Dendritic cell treated with granulocyte-macrophage colony-stimulating factor and Interleukin-4, amounts not matched to agents 40 ng/mL and 50 ng/mL, for 4 days (primary cell): ENCODE measurements at regions of chr9 and their contacts with region 1.

Region 1: GRCh38 chr9:111037381-111038305 is 627 bp downstream of the LPAR1 start:
- H3K4me3 Mint-ChIP-seq: peak overlapping the region; percentile 77
- H3K27ac Mint-ChIP-seq: peak overlapping the region; percentile 88
- H3K4me1 Mint-ChIP-seq: peaks cover 45% of the 10 kb centered on the region
- H3K27me3 Mint-ChIP-seq: peaks cover 20% of the 10 kb centered on the region

Region 2: GRCh38 chr9:110638381-110638954 is 399.2 kb before region 1 on chr9:
- intact Hi-C with region 1: loop called (anchors 5 kb)
- H3K4me3 Mint-ChIP-seq: no peak overlapping the region
- H3K27ac Mint-ChIP-seq: no peak overlapping the region
- H3K4me1 Mint-ChIP-seq: no peaks in the 10 kb centered on the region
- H3K27me3 Mint-ChIP-seq: no peaks in the 10 kb centered on the region

Region 3: GRCh38 chr9:110874963-110875674 is 162.5 kb before region 1 on chr9:
- intact Hi-C with region 1: loop called (anchors 10 kb)
- H3K4me3 Mint-ChIP-seq: no peak overlapping the region
- H3K27ac Mint-ChIP-seq: peak overlapping the region; percentile 52
- H3K4me1 Mint-ChIP-seq: peaks cover 43% of the 10 kb centered on the region
- H3K27me3 Mint-ChIP-seq: peaks cover 17% of the 10 kb centered on the region

Region 4: DNA sequence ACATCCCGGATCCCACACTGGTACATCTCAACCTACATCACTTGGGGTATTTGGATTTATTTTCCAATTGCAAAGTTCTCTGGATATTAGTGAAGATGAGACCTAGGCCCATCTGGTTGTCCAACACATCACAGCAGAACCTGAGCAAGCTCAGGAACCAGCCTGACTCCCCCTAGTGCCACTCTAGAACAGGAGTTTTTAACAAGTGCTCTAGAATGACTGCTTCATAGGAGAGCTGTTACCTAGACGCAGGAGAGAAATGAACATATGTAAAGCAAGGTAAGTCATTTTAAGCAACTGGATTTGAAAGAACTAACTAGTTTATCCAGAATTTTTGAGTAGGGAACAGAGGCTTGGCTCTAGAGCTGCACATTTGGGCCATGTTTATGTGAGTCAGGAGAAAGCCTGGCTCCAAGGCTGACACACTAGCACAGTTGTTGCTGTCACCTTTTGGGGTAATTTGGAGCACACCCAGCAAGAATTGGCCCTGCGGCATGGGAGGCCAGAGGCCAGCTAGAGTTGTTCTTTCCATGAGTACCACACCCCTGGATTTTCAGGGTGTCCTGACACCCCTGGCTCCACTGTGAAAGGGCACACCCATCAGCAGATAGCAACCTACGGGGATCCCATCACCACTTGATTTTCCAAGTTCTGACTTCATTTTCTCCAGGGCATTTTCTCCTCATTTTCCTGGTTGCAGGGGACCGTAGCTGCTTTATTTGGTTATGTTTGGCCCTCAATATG is 111.5 kb after region 1 on chr9:
- intact Hi-C with region 1: loop called (anchors 5 kb)
- H3K4me3 Mint-ChIP-seq: no peak overlapping the region
- H3K27ac Mint-ChIP-seq: peak overlapping the region; percentile 77
- H3K4me1 Mint-ChIP-seq: peaks cover 37% of the 10 kb centered on the region
- H3K27me3 Mint-ChIP-seq: no peaks in the 10 kb centered on the region

Region 5: DNA sequence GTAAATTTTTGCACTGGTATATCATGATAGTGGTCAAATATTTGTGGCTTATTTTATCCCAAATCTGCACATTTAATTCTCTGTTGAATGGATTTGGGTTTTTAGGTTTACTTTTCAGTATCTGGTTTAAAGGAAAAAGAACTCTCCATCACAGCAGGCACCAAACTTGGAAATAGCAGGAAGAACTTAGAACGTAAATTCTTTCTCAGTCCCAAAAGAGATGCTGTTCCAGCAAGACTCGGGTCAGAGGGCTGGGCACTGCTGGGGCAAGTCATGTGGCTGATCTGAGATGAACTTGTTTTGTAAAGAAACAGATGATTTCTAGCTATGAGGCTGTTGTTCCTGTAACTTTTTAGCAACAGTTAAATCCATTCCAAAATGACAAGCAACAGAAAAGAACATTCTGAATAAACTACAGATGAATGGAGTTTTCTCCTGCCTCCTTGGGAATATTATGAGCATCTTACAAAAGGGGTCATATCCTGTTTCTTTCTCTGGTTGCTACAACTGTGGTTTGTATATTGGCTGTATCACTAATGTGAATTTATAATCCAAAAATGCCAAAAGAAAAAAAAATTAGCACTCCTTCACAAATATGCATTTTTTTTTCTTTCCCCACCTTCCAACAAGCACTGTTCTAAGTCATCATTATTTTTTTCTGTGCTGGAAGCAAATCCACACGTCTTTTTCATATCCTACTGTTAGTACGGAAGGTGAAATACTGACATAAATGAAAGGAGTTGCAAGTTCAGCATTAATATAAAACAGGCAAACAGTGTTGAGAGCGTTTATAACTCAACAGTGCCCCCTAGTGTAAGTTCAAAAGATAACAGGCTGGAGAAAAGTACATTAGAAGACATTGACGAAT is 261.3 kb after region 1 on chr9:
- intact Hi-C with region 1: loop called (anchors 2 kb)
- H3K4me3 Mint-ChIP-seq: peak overlapping the region; percentile 30
- H3K27ac Mint-ChIP-seq: peak overlapping the region; percentile 68
- H3K4me1 Mint-ChIP-seq: peaks cover 7% of the 10 kb centered on the region
- H3K27me3 Mint-ChIP-seq: peaks cover 9% of the 10 kb centered on the region